GM12878 (cell line): ENCODE measurements at regions of chr6 and their contacts with region 1.

Region 1: GRCh38 chr6:52284460-52285176 is at the start of gene MCM3:
- DNase-seq: peak; percentile 100
- ATAC-seq: peak; percentile 96
- H3K4me3 ChIP-seq: peak within 1 kb of the TSS; percentile 79
- H3K27ac ChIP-seq: peak within 1 kb of the TSS; percentile 81
- H3K4me1 ChIP-seq: peaks cover 8% of the 10 kb centered on the region; the same call in 1 of the 2 replicates
- H3K27me3 ChIP-seq: no peaks in the 10 kb centered on the region
- CTCF ChIP-seq: peak; percentile 1 to 26 (median 3); a peak in 2 of 6 replicates
- EP300 ChIP-seq: no peak
- POLR2A ChIP-seq: peak; percentile 88
- RAD21 ChIP-seq: no peak
- polyA plus RNA-seq, gene MCM3: 74.1 to 96.3 TPM

Region 2: GRCh38 chr6:52162940-52163908 is 121.4 kb before region 1 on chr6:
- CTCF ChIA-PET with region 1: interaction called, 11 read pairs
- POLR2A ChIA-PET with region 1: no interaction called
- RAD21 ChIA-PET with region 1: interaction called, 7 read pairs
- SMC1A ChIA-PET with region 1: interaction called, 11 read pairs
- in situ Hi-C with region 1: no loop called
- intact Hi-C with region 1: no loop called
- DNase-seq: no peak
- ATAC-seq: peak; percentile 92
- H3K4me3 ChIP-seq: no peak overlapping the region
- H3K27ac ChIP-seq: no peak overlapping the region
- H3K4me1 ChIP-seq: peaks cover 9% of the 10 kb centered on the region; the same call in 1 of the 2 replicates
- H3K27me3 ChIP-seq: no peaks in the 10 kb centered on the region
- CTCF ChIP-seq: peak; percentile 84 to 95 (median 91)
- EP300 ChIP-seq: no peak
- POLR2A ChIP-seq: no peak
- RAD21 ChIP-seq: peak; percentile 100

Region 3: DNA sequence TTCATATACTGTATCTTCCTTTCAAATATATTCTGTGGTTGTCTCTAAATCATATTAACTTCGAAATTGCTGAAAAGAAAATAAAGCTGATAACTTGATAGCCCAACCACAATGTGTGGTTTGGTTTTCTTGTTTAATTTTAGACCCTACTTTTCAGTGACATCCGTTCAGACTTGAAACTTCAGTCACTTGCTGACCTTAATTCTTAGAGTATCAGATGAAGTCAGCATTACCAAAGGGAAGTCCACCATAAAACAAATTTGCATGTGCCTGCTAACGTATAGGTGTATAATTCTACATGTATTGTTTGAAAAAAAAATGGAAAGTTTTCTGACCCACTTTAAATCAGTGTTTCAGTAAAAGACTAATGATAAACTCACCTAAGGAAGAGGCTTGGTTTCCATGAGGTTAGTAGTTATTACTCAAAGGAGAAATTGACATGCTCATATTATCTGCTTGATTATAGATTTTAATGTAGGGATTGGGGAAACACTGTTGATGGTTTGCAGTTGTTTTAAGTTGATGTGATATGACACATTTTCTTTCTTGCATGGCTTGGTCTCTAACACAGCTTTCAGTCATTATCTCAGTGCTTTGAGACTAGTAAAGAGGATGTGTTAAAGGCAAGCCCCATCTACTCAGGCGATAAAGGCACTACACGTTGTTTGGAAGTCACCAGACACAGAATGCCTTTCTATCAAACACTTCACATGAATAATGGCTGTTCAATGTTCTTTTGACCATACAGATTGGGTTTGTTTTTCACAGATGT is 103.6 kb before region 1 on chr6:
- CTCF ChIA-PET with region 1: no interaction called
- POLR2A ChIA-PET with region 1: no interaction called
- RAD21 ChIA-PET with region 1: no interaction called
- SMC1A ChIA-PET with region 1: no interaction called
- in situ Hi-C with region 1: no loop called
- intact Hi-C with region 1: no loop called
- DNase-seq: peak; percentile 58
- ATAC-seq: peak; percentile 81
- H3K4me3 ChIP-seq: 0 out of 2 replicates have a peak overlapping the region, but pooled peaks have one; percentile 18
- H3K27ac ChIP-seq: peak overlapping the region; percentile 40
- H3K4me1 ChIP-seq: peaks cover 28% of the 10 kb centered on the region
- H3K27me3 ChIP-seq: peaks cover 0 to 2% of the 10 kb centered on the region in 2 experiments; a peak in 2 of 4 replicates
- CTCF ChIP-seq: no peak
- EP300 ChIP-seq: peak; percentile 7 to 40; a peak in 1 of 4 replicates
- POLR2A ChIP-seq: no peak
- RAD21 ChIP-seq: no peak

Region 4: DNA sequence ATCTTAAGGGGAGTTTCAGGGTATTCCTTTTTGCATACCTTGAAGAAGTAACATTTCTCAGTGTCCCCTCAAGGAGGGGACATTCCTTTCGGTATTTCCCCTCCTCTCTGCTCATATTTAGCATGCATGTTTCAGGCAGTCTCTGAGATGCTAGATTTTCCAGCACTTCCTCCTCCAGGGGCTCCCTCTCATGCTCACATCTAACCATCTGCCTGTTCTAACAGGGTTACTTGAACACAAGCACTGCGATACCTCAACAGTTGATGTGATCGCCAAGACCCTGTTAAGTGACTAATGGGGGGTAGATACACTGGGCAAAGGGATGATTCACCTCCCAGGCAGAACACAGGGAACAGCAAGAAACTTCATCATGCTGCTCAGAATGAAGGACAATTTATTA is 12.8 kb after region 1 on chr6:
- CTCF ChIA-PET with region 1: interaction called, 52 read pairs
- POLR2A ChIA-PET with region 1: interaction called, 10 read pairs
- RAD21 ChIA-PET with region 1: interaction called, 70 read pairs
- SMC1A ChIA-PET with region 1: interaction called, 39 read pairs
- in situ Hi-C with region 1: no loop called
- intact Hi-C with region 1: no loop called
- DNase-seq: no peak
- ATAC-seq: peak; percentile 70
- H3K4me3 ChIP-seq: peak overlapping the region; percentile 19; the same call in 1 of the 2 replicates
- H3K27ac ChIP-seq: peak overlapping the region; percentile 86
- H3K4me1 ChIP-seq: peaks cover 51% of the 10 kb centered on the region
- H3K27me3 ChIP-seq: no peaks in the 10 kb centered on the region
- CTCF ChIP-seq: 0 out of 6 replicates have a peak, but pooled peaks of 1 of the 3 experiments have one; percentile 9
- EP300 ChIP-seq: no peak
- POLR2A ChIP-seq: no peak
- RAD21 ChIP-seq: peak; percentile 32; the same call in 1 of the 2 replicates

Region 5: GRCh38 chr6:52361945-52362442 is 77.4 kb after region 1 on chr6 and contains the start of gene PAQR8:
- CTCF ChIA-PET with region 1: interaction called, 110 read pairs
- POLR2A ChIA-PET with region 1: interaction called, 79 read pairs
- RAD21 ChIA-PET with region 1: interaction called, 125 read pairs
- SMC1A ChIA-PET with region 1: interaction called, 112 read pairs
- in situ Hi-C with region 1: no loop called
- intact Hi-C with region 1: loop called (anchors 1 kb)
- DNase-seq: no peak
- ATAC-seq: peak; percentile 90
- H3K4me3 ChIP-seq: peak within 1 kb of the TSS; percentile 94
- H3K27ac ChIP-seq: peak within 1 kb of the TSS; percentile 80
- H3K4me1 ChIP-seq: peaks cover 20% of the 10 kb centered on the region
- H3K27me3 ChIP-seq: no peaks in the 10 kb centered on the region
- CTCF ChIP-seq: no peak
- EP300 ChIP-seq: no peak
- POLR2A ChIP-seq: peak; percentile 78
- RAD21 ChIP-seq: no peak
- polyA plus RNA-seq, gene PAQR8: 3.9 to 4.7 TPM

Region 6: DNA sequence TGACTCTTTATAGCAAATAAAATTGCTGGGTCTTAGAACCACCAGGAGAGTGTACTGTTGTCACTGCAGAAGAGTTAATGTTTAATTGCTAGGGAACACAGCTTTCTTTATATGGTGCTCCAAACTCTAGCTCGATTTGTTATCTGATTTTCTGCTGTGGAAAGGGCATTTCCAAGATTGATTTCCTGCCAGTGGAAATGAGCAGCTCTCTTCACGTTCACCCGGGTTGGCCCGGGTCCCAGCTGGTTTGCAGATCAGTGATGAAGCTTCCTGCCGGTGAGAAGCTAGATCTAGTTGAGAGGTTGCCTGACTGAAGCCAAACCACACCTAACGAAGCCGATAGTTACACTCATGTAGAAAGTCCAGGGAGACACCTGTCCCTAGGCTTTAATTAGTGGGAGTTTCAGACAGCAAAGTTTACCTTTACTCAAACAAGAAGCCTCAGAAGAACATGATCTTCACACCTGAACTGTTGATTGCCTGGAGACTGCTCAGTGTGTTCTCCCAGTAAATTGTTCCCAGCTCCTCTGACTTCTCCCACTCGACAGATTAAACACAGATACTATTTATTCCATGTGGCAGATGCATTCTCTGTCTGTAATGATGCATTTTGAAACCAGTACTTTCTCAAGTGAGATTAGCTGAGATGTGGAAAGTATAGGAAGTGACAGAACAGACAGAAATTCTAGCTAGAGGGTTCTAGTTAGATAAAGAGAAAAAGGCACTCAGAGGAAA is 105.2 kb after region 1 on chr6:
- CTCF ChIA-PET with region 1: interaction called, 441 read pairs
- POLR2A ChIA-PET with region 1: interaction called, 42 read pairs
- RAD21 ChIA-PET with region 1: interaction called, 112 read pairs
- SMC1A ChIA-PET with region 1: interaction called, 358 read pairs
- in situ Hi-C with region 1: no loop called
- intact Hi-C with region 1: loop called (anchors 1 kb)
- DNase-seq: peak; percentile 87
- ATAC-seq: peak; percentile 78
- H3K4me3 ChIP-seq: peak overlapping the region; percentile 43; the same call in 1 of the 2 replicates
- H3K27ac ChIP-seq: peak overlapping the region; percentile 94
- H3K4me1 ChIP-seq: peaks cover 63% of the 10 kb centered on the region
- H3K27me3 ChIP-seq: no peaks in the 10 kb centered on the region
- CTCF ChIP-seq: no peak; a peak in 1 of 6 replicates
- EP300 ChIP-seq: peak; percentile 66 to 69; a peak in 2 of 4 replicates
- POLR2A ChIP-seq: no peak
- RAD21 ChIP-seq: peak; percentile 10; the same call in 1 of the 2 replicates

Region 7: DNA sequence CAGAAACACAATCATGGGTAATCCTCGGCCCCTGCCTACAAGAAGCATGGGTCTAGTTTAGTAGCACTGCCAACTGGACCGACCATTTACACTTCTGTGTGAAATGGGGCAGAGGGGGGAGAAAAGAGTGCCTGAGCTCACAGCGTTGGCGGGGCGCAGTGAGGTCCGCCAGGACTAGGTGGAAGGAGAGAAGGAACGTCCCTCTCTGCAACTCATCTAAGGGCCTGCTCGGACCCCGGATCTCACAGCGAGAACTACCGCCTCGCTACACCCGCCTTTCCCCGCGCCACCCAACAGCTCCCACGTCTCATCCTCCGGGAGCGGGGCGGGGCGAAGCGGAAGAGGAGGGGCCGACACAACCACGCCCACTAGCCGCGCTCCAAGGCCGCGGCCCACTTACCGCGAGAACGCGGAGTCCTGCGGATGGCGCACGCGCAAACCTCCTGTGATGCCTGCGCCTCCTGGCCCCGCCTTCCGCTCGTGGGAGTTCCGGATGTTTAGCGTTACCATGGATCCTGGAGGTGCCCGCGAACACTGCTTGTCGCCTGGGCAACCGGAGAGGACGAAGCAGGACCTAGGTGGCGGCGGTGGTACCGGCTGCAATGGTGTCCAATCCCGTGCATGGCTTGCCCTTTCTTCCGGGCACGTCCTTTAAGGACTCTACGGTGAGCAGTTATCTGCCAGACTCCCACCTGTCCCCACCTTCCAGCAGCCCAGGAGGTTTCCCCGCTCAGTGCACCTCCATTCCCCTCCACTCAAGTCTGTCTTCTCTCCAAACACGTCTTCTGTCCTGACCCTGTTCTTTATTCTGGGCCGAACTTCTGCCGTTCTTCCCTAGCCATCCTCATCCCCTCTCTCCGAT is 135.4 kb after region 1 on chr6 and contains the start of gene EFHC1:
- CTCF ChIA-PET with region 1: interaction called, 58 read pairs
- POLR2A ChIA-PET with region 1: interaction called, 7 read pairs
- RAD21 ChIA-PET with region 1: interaction called, 30 read pairs
- SMC1A ChIA-PET with region 1: interaction called, 45 read pairs
- in situ Hi-C with region 1: no loop called
- intact Hi-C with region 1: no loop called
- DNase-seq: peak; percentile 92
- ATAC-seq: peak; percentile 93
- H3K4me3 ChIP-seq: peak within 1 kb of the TSS; percentile 83
- H3K27ac ChIP-seq: peak within 1 kb of the TSS; percentile 79
- H3K4me1 ChIP-seq: peaks cover 18% of the 10 kb centered on the region
- H3K27me3 ChIP-seq: no peaks in the 10 kb centered on the region
- CTCF ChIP-seq: no peak
- EP300 ChIP-seq: peak in 1 of 2 experiments; percentile 50; a peak in 1 of 4 replicates
- POLR2A ChIP-seq: peak; percentile 96
- RAD21 ChIP-seq: no peak
- polyA plus RNA-seq, gene EFHC1: 9.0 to 9.1 TPM

Region 8: DNA sequence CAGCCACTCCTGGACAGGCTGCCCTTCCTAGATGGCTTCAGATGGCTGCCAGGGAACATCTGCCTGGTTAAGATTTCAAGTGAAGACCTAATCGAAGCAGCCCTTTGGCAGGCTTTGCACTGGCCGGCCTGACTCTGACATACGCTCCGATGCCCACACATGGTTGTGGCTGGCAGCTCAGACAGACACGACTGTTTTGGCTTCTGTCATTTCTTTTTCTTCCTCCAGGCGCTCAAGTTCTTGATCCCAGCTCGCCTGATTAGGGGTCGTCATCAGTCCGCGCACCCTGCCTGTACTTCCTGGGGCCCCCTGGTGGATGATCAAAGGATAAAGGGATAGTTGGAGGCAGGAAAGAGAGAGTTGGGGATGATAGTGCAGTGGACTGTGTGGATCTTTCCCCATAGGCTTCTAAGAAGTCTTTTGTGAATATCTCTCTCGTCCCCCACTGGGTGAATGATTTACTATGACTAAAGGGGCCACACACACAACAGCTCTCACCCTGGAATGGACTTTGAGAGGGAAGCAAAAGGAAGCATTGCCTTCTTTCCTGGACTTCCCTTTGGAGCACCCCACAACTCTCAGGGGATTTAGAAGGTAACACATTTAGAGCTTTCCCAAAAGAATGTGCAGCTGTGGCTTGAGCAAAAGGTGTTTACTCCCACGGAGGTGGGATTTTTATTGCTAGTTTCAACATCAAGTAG is 313.7 kb after region 1 on chr6:
- CTCF ChIA-PET with region 1: interaction called, 4 read pairs
- POLR2A ChIA-PET with region 1: no interaction called
- RAD21 ChIA-PET with region 1: interaction called, 3 read pairs
- SMC1A ChIA-PET with region 1: interaction called, 4 read pairs
- in situ Hi-C with region 1: no loop called
- intact Hi-C with region 1: loop called (anchors 10 kb)
- DNase-seq: no peak
- ATAC-seq: peak; percentile 53
- H3K4me3 ChIP-seq: no peak overlapping the region
- H3K27ac ChIP-seq: no peak overlapping the region
- H3K4me1 ChIP-seq: peaks cover 30% of the 10 kb centered on the region
- H3K27me3 ChIP-seq: no peaks in the 10 kb centered on the region
- CTCF ChIP-seq: peak; percentile 41 to 60 (median 51)
- EP300 ChIP-seq: no peak
- POLR2A ChIP-seq: no peak
- RAD21 ChIP-seq: peak; percentile 56